ENCODE measurements at regions of chr1 and their contacts with region 1.

Region 1: GRCh38 chr1:182781841-182782586 is 7.6 kb upstream of the NPL start:
- DNase-seq: peak; percentile 86
- ATAC-seq: peak; percentile 77
- H3K4me3 Mint-ChIP-seq: no peak overlapping the region
- H3K27ac Mint-ChIP-seq: no peak overlapping the region
- H3K4me1 Mint-ChIP-seq: peaks cover 3% of the 10 kb centered on the region
- H3K27me3 Mint-ChIP-seq: no peaks in the 10 kb centered on the region

Region 2: DNA sequence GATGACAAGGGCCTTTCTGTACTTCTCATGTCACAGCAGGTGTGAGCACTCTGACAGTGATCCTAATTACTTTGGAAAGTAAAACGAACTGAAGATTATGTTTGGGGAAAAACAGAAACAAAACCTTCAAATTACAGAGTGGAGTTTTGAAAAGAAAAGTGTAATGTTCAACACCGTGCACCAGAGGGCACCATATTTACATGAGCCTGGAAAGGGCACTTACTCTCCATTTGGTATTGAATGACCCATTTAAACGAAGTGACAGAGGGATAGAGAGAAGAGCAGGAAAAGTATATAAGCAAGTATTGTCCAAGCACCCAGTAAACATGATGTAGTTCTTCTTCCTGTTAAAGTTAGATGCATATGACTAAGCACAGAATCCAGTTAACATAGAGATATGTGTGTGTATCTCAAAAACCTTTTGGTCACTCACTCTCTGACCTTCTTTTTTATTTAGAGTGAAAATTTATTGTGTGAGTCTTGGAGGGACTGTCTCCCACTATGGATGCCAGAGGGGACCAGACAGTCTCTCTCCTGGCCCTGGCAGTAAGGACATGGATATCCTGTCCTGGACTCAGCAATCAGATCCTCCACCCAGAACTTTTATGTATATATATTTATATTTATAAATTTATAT is 335.9 kb before region 1 on chr1:
- CTCF ChIA-PET with region 1: interaction called, 8 read pairs
- POLR2A ChIA-PET with region 1: no interaction called
- intact Hi-C with region 1: loop called (anchors 1 kb)
- DNase-seq: peak; percentile 45
- ATAC-seq: peak; percentile 66
- H3K4me3 Mint-ChIP-seq: no peak overlapping the region
- H3K27ac Mint-ChIP-seq: no peak overlapping the region
- H3K4me1 Mint-ChIP-seq: peaks cover 2% of the 10 kb centered on the region
- H3K27me3 Mint-ChIP-seq: no peaks in the 10 kb centered on the region

Region 3: GRCh38 chr1:182716740-182717720 is 65.0 kb before region 1 on chr1:
- CTCF ChIA-PET with region 1: interaction called, 5 read pairs
- POLR2A ChIA-PET with region 1: no interaction called
- intact Hi-C with region 1: loop called in 1 of 2 experiments (anchors 5 kb)
- DNase-seq: no peak
- ATAC-seq: peak; percentile 31
- H3K4me3 Mint-ChIP-seq: no peak overlapping the region
- H3K27ac Mint-ChIP-seq: peak overlapping the region; percentile 17
- H3K4me1 Mint-ChIP-seq: peaks cover 50% of the 10 kb centered on the region
- H3K27me3 Mint-ChIP-seq: peaks cover 2% of the 10 kb centered on the region

Region 4: GRCh38 chr1:182761396-182762395 is 20.3 kb before region 1 on chr1:
- CTCF ChIA-PET with region 1: interaction called, 24 read pairs
- POLR2A ChIA-PET with region 1: no interaction called
- intact Hi-C with region 1: no loop called
- DNase-seq: no peak
- ATAC-seq: no peak
- H3K4me3 Mint-ChIP-seq: no peak overlapping the region
- H3K27ac Mint-ChIP-seq: peak overlapping the region; percentile 55
- H3K4me1 Mint-ChIP-seq: no peaks in the 10 kb centered on the region
- H3K27me3 Mint-ChIP-seq: peaks cover 10% of the 10 kb centered on the region

Region 5: GRCh38 chr1:182795563-182796228 is 13.7 kb after region 1 on chr1:
- CTCF ChIA-PET with region 1: interaction called, 14 read pairs
- POLR2A ChIA-PET with region 1: no interaction called
- intact Hi-C with region 1: no loop called
- DNase-seq: no peak
- ATAC-seq: peak; percentile 33
- H3K4me3 Mint-ChIP-seq: no peak overlapping the region
- H3K27ac Mint-ChIP-seq: no peak overlapping the region
- H3K4me1 Mint-ChIP-seq: peaks cover 5% of the 10 kb centered on the region
- H3K27me3 Mint-ChIP-seq: no peaks in the 10 kb centered on the region

Region 6: GRCh38 chr1:183070923-183071618 is 289.1 kb after region 1 on chr1:
- CTCF ChIA-PET with region 1: no interaction called
- POLR2A ChIA-PET with region 1: no interaction called
- intact Hi-C with region 1: no loop called
- DNase-seq: no peak
- ATAC-seq: no peak
- H3K4me3 Mint-ChIP-seq: no peak overlapping the region
- H3K27ac Mint-ChIP-seq: no peak overlapping the region
- H3K4me1 Mint-ChIP-seq: peaks cover 3% of the 10 kb centered on the region
- H3K27me3 Mint-ChIP-seq: peaks cover 4% of the 10 kb centered on the region